ENCODE measurements at regions of chr10 and their contacts with region 1.

Region 1: DNA sequence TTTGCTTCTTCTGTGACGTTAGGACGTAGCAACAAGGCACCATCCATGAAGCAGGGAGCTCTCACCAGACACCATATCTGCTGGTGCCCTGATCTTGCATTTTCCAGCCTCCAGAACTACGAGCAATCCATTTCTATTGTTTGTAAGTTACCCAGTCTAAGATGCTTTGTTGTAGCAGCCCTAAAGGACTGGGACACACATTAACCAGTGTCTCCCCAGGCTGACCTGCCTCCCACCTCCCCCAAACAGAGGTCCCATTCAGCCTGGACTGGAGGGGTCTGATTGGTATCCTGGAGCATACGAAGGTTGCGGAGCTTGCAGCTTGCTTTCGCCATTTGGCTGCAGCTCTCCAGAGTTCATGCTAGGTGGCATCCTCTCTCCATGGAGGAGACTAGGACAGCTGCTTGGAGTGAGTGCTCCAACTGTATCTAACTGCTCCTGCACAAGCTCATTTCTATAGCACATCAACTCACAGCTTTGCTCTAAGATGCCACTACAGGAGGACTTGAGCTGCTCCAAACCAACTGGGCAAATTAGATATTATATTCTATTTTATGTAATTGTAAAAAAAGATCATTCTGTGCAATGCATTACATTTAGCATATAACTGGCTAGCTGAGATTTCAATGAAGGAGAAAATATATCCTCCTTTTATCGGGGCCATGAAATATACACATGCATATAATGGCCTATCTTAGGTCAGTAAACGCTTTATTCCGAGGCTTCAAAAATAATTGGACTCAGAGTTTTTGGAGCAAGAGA is 8.0 kb upstream of the GRK5 start:
- DNase-seq: peak; percentile 37 to 80
- ATAC-seq: peak; percentile 91 to 97 (median 94)
- H3K4me3 ChIP-seq: no peak overlapping the region
- H3K27ac ChIP-seq: no peak overlapping the region
- H3K4me1 ChIP-seq: peaks cover 0 to 21% (median 0%) of the 10 kb centered on the region in 9 donors
- H3K27me3 ChIP-seq: peaks cover 0 to 4% (median 0%) of the 10 kb centered on the region in 7 donors
- CTCF ChIP-seq: peak; percentile 79 to 92 (median 86)

Region 2: DNA sequence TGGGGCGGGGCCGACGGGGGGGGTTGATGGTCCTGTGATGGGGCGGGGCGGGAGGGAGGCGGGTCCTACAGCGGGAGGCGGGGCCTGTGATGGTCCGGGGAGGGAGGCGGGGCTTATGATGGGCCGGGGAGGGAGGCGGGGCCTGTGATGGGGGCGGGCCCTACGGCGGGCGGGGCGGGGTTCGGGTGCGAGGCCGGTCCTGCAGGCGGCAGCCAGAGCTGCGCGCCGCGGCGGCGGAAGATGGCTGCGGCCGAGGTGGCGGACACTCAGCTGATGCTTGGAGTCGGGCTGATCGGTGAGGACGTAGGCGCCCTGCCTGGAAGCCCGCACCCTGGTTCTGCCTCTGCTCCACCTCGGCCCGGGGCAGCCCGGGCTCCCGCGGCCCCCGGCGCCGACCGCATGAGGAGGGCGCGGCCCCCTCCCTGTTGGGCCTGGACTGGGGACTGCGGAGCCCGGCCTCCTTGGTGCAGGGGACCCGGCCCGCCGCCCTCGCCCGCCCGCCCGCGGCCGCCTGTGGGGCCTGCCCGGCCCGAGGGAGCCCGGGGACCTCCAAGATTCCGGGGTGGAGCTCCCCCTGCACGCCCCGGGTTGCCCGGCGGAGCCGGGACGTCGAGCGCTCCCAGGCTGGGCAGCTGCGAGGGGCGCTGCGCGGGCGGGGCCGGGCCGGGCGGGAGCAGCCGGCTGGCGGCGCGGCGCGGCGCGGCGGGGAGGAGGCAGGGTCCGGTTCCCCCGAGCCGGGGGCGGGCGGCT is 95.3 kb before region 1 on chr10 and contains the start of gene DENND10:
- intact Hi-C with region 1: no loop called
- DNase-seq: peak; percentile 84 to 86
- ATAC-seq: peak; percentile 93 to 97 (median 96)
- H3K4me3 ChIP-seq: peak within 1 kb of the TSS; percentile 67 to 90 (median 79)
- H3K27ac ChIP-seq: peak within 1 kb of the TSS in 9 of 10 donors; percentile 59 to 87 (median 81)
- H3K4me1 ChIP-seq: peaks cover 0 to 28% (median 19%) of the 10 kb centered on the region in 9 donors
- H3K27me3 ChIP-seq: no peaks in the 10 kb centered on the region
- CTCF ChIP-seq: peak in 2 of 9 donors; percentile 20 to 30
- total RNA-seq, gene DENND10: 17.1 to 28.4 (median 23.4) TPM

Region 3: DNA sequence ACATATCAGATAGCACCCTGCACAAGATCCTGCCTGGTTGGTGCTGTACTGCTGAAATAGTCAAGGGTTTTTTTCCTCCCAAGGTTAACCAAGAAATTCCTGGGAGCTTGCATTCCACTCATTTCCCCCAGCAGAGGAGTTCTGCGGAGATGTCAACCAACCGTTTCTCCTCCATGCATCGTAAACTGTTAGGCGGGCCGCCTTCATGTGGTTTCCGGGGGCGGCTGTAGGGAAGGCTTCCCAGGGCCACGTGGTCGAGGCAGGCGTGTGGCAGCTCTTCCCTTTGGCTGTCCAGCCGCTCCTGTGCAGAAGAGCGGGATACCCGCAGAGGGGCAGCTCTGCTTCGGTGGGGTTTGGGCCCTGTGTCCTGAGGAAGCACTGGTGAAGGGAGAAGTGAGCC is 229.4 kb after region 1 on chr10:
- intact Hi-C with region 1: loop called in 1 of 10 experiments (anchors 5 kb)
- DNase-seq: no peak
- ATAC-seq: no peak
- H3K4me3 ChIP-seq: no peak overlapping the region
- H3K27ac ChIP-seq: peak overlapping the region in 1 of 10 donors; percentile 13
- H3K4me1 ChIP-seq: no peaks in the 10 kb centered on the region
- H3K27me3 ChIP-seq: no peaks in the 10 kb centered on the region
- CTCF ChIP-seq: no peak

Region 4: GRCh38 chr10:119445311-119445934 is 246.0 kb after region 1 on chr10:
- intact Hi-C with region 1: loop called in 9 of 10 experiments (anchors 1 to 10 kb)
- DNase-seq: peak; percentile 85 to 88
- ATAC-seq: peak; percentile 46 to 79 (median 68)
- H3K4me3 ChIP-seq: no peak overlapping the region
- H3K27ac ChIP-seq: peak overlapping the region in 6 of 10 donors; percentile 42 to 68 (median 50)
- H3K4me1 ChIP-seq: peaks cover 11 to 60% (median 32%) of the 10 kb centered on the region in 9 donors
- H3K27me3 ChIP-seq: no peaks in the 10 kb centered on the region
- CTCF ChIP-seq: peak; percentile 95 to 98 (median 97)

Region 5: GRCh38 chr10:119489991-119490326 is 290.5 kb after region 1 on chr10:
- intact Hi-C with region 1: loop called in 4 of 10 experiments (anchors 2 to 5 kb)
- DNase-seq: no peak
- ATAC-seq: no peak
- H3K4me3 ChIP-seq: peak overlapping the region in 7 of 10 donors; percentile 16 to 42 (median 22)
- H3K27ac ChIP-seq: peak overlapping the region in 1 of 10 donors; percentile 76
- H3K4me1 ChIP-seq: peaks cover 5 to 27% (median 11%) of the 10 kb centered on the region in 9 donors
- H3K27me3 ChIP-seq: no peaks in the 10 kb centered on the region
- CTCF ChIP-seq: peak in 3 of 9 donors; percentile 2 to 33 (median 24)

Region 6: GRCh38 chr10:119542988-119543813 is 343.8 kb after region 1 on chr10:
- intact Hi-C with region 1: loop called in 4 of 10 experiments (anchors 2 to 5 kb)
- DNase-seq: peak; percentile 54 to 58
- ATAC-seq: peak; percentile 60 to 79 (median 70)
- H3K4me3 ChIP-seq: peak overlapping the region; percentile 42 to 85 (median 65)
- H3K27ac ChIP-seq: peak overlapping the region in 8 of 10 donors; percentile 40 to 89 (median 66)
- H3K4me1 ChIP-seq: peaks cover 0 to 43% (median 16%) of the 10 kb centered on the region in 9 donors
- H3K27me3 ChIP-seq: peaks cover 0 to 51% (median 48%) of the 10 kb centered on the region in 7 donors
- CTCF ChIP-seq: peak in 8 of 9 donors; percentile 17 to 66 (median 54)